CD8-positive, alpha-beta memory T cell (primary cell): ENCODE measurements at regions of chr3 and their contacts with region 1.

Region 1: GRCh38 chr3:12959838-12960378 is 113.3 kb downstream of the IQSEC1 start:
- DNase-seq: no peak
- H3K4me3 ChIP-seq: no peak overlapping the region
- H3K4me3 Mint-ChIP-seq: no peak overlapping the region
- H3K27ac ChIP-seq: no peak overlapping the region
- H3K27ac Mint-ChIP-seq: peak overlapping the region in 1 of 8 donors; percentile 36
- H3K4me1 ChIP-seq: peaks cover 84% of the 10 kb centered on the region
- H3K4me1 Mint-ChIP-seq: peaks cover 69 to 94% (median 83%) of the 10 kb centered on the region in 3 donors
- H3K27me3 ChIP-seq: no peaks in the 10 kb centered on the region
- H3K27me3 Mint-ChIP-seq: no peaks in the 10 kb centered on the region

Region 2: GRCh38 chr3:12835005-12835665 is 124.8 kb before region 1 on chr3:
- CTCF ChIA-PET with region 1: no interaction called
- POLR2A ChIA-PET with region 1: no interaction called
- DNase-seq: no peak
- H3K4me3 ChIP-seq: no peak overlapping the region
- H3K4me3 Mint-ChIP-seq: no peak overlapping the region
- H3K27ac ChIP-seq: no peak overlapping the region
- H3K27ac Mint-ChIP-seq: peak overlapping the region in 1 of 8 donors; percentile 68
- H3K4me1 ChIP-seq: peaks cover 28% of the 10 kb centered on the region
- H3K4me1 Mint-ChIP-seq: peaks cover 24 to 40% (median 37%) of the 10 kb centered on the region in 3 donors
- H3K27me3 ChIP-seq: no peaks in the 10 kb centered on the region
- H3K27me3 Mint-ChIP-seq: no peaks in the 10 kb centered on the region

Region 3: DNA sequence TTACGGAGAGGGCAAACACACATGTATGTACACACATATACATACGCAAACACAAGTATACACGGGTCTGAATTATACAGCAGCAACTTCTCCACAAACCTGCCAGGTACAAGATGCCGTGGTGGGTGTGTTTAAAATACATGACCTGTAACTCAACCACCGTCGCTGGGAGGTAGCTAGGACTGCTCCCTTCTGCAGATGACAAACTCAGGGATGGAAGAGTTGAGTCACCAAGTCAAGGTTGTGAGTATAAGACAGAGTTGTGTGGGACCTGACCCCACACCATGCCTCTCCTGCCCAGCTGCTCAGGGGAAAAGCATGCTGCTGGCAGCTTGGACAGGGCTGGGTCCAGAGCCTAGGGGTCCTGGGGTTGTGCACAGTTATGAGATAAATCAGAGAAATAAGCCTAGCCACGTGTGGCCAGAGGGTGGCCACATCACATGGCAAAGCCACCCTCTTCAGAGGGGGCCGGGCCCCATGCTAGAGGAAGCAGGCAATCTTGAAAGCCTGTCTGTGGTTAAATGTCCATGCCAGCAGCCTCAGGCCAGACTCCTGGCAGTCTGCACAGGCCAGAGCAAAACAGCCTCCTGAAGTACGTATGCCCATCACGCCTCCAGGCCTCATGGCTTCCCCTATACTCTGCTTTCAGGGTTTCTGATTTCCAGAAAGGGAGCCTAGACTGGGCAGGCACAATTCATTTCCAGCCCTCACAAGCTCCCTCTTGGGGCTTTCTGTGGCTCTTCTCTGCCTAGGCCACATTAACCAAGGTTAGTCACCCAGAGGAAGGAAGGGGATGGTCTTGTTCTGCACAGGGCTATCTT is 10.8 kb before region 1 on chr3:
- CTCF ChIA-PET with region 1: interaction called, 11 read pairs
- POLR2A ChIA-PET with region 1: interaction called, 3 read pairs
- DNase-seq: peak in 1 of 5 donors; percentile 17
- H3K4me3 ChIP-seq: no peak overlapping the region
- H3K4me3 Mint-ChIP-seq: peak overlapping the region in 4 of 7 donors; percentile 20 to 59 (median 53)
- H3K27ac ChIP-seq: no peak overlapping the region
- H3K27ac Mint-ChIP-seq: peak overlapping the region; percentile 36 to 95 (median 64)
- H3K4me1 ChIP-seq: peaks cover 52% of the 10 kb centered on the region
- H3K4me1 Mint-ChIP-seq: peaks cover 55 to 71% (median 59%) of the 10 kb centered on the region in 3 donors
- H3K27me3 ChIP-seq: no peaks in the 10 kb centered on the region
- H3K27me3 Mint-ChIP-seq: no peaks in the 10 kb centered on the region

Region 4: GRCh38 chr3:13073326-13074005 is 113.6 kb after region 1 on chr3 and contains the start of gene IQSEC1:
- CTCF ChIA-PET with region 1: no interaction called
- POLR2A ChIA-PET with region 1: no interaction called
- DNase-seq: peak; percentile 56 to 88 (median 77)
- H3K4me3 ChIP-seq: peak within 1 kb of the TSS; percentile 52
- H3K4me3 Mint-ChIP-seq: peak within 1 kb of the TSS; percentile 72 to 85 (median 81)
- H3K27ac ChIP-seq: peak within 1 kb of the TSS; percentile 12
- H3K27ac Mint-ChIP-seq: peak within 1 kb of the TSS; percentile 54 to 91 (median 70)
- H3K4me1 ChIP-seq: peaks cover 35% of the 10 kb centered on the region
- H3K4me1 Mint-ChIP-seq: peaks cover 38 to 63% (median 44%) of the 10 kb centered on the region in 3 donors
- H3K27me3 ChIP-seq: peaks cover 17% of the 10 kb centered on the region
- H3K27me3 Mint-ChIP-seq: peaks cover 7 to 13% of the 10 kb centered on the region in 2 donors
- total RNA-seq, gene IQSEC1: 18.5 to 19.8 TPM